ENCODE measurements at regions of chr18 and their contacts with region 1.

Region 1: DNA sequence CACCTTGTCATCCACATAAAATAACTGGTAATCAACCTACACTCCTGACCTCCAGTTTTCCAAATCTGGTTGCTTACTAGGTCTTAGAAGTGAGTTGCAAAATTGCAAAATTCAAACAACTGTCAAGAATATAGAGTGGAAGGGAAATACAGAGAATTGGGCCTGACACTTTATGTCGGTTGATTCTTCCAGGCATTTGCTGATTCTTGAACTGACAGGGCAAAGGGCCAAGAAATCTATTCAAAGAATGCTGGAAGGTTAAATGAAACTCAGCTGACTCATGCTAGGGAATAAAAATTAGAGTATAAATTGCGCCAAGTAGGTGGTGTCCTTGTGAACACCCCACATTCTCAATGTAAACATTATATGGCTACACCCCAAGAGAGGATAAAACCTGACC is 21.4 kb upstream of the ZSCAN30 start:
- DNase-seq: no peak
- ATAC-seq: no peak
- H3K4me3 ChIP-seq: no peak overlapping the region
- H3K27ac ChIP-seq: no peak overlapping the region
- H3K4me1 ChIP-seq: peaks cover 0 to 10% (median 0%) of the 10 kb centered on the region in 12 donors
- H3K27me3 ChIP-seq: no peaks in the 10 kb centered on the region
- CTCF ChIP-seq: no peak
- POLR2A ChIP-seq: no peak

Region 2: GRCh38 chr18:35376742-35377695 is 65.5 kb after region 1 on chr18 and contains the start of gene ZNF396:
- intact Hi-C with region 1: loop called in 1 of 10 experiments (anchors 10 kb)
- DNase-seq: peak; percentile 84 to 91 (median 88)
- ATAC-seq: peak; percentile 74 to 96 (median 93)
- H3K4me3 ChIP-seq: peak within 1 kb of the TSS; percentile 60 to 97 (median 83)
- H3K27ac ChIP-seq: peak within 1 kb of the TSS in 6 of 12 donors; percentile 30 to 77 (median 62)
- H3K4me1 ChIP-seq: peaks cover 0 to 12% (median 0%) of the 10 kb centered on the region in 12 donors
- H3K27me3 ChIP-seq: peaks cover 0 to 3% (median 0%) of the 10 kb centered on the region in 9 donors
- CTCF ChIP-seq: no peak
- POLR2A ChIP-seq: no peak
- total RNA-seq, gene ZNF396: 0.38 to 2.2 (median 0.85) TPM

Measured in heart left ventricle (tissue), 16 donors.